ENCODE measurements at regions of chr7 and their contacts with region 1.

Region 1: DNA sequence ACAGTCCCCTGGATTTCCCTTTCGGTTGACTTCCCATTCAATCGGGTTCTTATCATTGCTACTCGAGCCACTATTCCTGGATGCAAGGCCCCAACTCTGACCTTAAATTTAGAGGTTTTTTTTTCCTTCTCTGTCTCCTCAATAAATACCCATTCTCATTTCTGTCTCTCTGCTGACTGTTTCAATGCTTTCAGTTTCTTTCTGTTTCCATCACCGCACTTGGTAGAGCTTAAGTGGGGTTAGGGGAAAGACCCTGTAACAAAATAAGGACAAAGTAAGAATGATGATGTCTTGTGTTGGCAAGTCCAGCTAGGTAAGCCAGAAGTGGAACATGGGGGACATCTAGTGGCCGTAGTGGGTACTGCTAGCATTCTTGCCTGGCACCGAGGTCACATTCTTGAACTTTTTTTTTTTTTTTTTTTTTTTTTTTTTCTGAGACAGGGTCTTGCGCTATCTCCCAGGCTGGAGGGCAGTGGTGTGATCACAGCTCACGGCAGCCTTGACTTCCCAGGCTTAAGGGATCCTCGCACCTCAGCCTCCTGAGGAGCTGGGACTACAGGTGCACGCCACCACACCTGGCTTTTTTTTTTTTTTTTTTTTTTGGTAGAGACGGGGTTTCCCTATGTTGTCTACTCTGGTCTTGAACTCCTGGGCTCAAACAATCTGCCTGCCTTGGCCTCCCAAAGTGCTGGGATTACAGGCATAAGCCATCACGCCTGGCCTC is 40.3 kb downstream of the ZC3HC1 start:
- DNase-seq: peak in 3 of 4 donors; percentile 65 to 92 (median 78)
- ATAC-seq: peak; percentile 84
- H3K4me3 ChIP-seq: no peak overlapping the region
- H3K27ac ChIP-seq: peak overlapping the region in 1 of 2 donors; percentile 4
- H3K4me1 ChIP-seq: peaks cover 11 to 22% of the 10 kb centered on the region in 2 donors
- H3K27me3 ChIP-seq: no peaks in the 10 kb centered on the region
- CTCF ChIP-seq: peak; percentile 85 to 94

Region 2: DNA sequence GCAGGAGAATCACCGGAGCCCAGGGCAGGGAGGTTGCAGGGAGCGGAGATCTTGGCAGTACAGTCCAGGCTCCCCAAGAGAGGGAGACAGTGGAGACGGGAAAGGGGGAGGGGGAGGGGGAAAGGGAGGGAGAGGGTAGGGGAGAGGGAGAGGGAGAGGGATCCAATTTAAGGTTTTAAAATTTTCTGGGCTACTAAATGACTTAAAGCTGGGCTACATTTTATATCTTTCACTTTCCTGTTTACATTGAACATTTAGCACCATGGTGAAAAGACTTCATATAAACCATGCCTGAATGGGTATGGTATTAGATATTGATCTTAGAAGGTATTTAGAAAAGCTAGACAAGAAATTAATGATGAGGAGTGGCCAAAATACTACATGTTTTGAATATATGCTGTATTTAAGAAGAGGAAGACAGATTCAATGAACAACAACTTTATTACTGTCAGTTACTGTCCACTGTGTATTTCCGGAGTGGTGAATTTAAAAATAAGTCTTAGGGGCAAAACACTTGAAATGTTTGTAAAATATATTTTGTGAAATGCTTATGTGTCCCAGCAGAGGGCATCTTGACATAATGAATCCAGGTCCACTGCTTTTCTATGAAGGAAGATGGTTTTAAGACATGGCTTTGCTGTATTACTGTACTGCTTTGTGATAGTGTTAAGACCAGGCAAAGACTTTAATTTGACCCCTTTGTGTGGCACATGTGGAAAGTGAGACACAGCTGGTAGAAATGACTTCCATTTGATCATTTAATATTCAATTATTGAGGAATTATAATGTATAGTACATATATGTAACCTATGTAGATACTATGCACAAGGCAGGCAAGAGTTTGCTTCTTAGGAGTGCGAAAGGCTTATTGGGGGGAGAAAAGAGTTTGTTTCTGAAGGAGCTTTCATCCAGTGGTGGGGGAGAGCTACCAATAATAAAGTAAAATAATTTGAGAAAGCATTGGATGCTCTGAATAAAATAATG is 346.5 kb before region 1 on chr7:
- intact Hi-C with region 1: loop called in 1 of 2 experiments (anchors 10 kb)
- DNase-seq: peak in 2 of 4 donors; percentile 23 to 49
- ATAC-seq: peak; percentile 89
- H3K4me3 ChIP-seq: no peak overlapping the region
- H3K27ac ChIP-seq: peak overlapping the region in 1 of 2 donors; percentile 13
- H3K4me1 ChIP-seq: peaks cover 0 to 13% of the 10 kb centered on the region in 2 donors
- H3K27me3 ChIP-seq: no peaks in the 10 kb centered on the region
- CTCF ChIP-seq: peak; percentile 9 to 45

Region 3: GRCh38 chr7:129825496-129826267 is 185.2 kb before region 1 on chr7:
- intact Hi-C with region 1: loop called in 1 of 2 experiments (anchors 10 kb)
- DNase-seq: peak; percentile 84 to 100 (median 90)
- ATAC-seq: peak; percentile 88
- H3K4me3 ChIP-seq: peak overlapping the region; percentile 61 to 81
- H3K27ac ChIP-seq: peak overlapping the region; percentile 53 to 56
- H3K4me1 ChIP-seq: peaks cover 7 to 37% of the 10 kb centered on the region in 2 donors
- H3K27me3 ChIP-seq: no peaks in the 10 kb centered on the region
- CTCF ChIP-seq: peak; percentile 93 to 99

Region 4: DNA sequence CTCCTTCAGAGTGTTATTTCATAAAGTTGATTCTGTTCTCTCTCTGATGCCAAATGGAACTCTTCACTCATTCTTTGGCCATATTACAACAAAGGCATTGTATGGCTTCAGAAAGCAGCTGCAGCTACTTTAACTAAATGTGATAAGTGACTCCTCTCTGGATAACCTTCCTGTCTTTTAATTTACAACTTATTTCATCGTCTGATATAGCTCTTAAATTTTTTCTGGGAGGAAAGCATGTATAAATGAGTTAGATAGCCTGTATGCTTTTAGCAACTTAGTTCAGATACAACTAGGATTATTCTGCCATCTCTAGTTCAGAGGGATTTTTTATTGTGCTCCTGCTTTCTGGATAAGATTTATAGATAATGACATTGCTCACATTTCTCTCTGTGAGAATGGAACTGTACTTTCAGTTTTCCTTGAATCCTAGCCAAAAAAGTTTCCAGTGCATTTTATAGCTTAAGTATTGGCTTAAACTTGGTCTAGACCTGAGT is 117.0 kb after region 1 on chr7:
- intact Hi-C with region 1: no loop called
- DNase-seq: peak in 2 of 4 donors; percentile 37 to 44
- ATAC-seq: no peak
- H3K4me3 ChIP-seq: no peak overlapping the region
- H3K27ac ChIP-seq: no peak overlapping the region
- H3K4me1 ChIP-seq: no peaks in the 10 kb centered on the region
- H3K27me3 ChIP-seq: no peaks in the 10 kb centered on the region
- CTCF ChIP-seq: no peak

Measured in left lung (tissue), 14 donors.